GM12878 (cell line): ENCODE measurements at regions of chr2 and their contacts with region 1.

Region 1: DNA sequence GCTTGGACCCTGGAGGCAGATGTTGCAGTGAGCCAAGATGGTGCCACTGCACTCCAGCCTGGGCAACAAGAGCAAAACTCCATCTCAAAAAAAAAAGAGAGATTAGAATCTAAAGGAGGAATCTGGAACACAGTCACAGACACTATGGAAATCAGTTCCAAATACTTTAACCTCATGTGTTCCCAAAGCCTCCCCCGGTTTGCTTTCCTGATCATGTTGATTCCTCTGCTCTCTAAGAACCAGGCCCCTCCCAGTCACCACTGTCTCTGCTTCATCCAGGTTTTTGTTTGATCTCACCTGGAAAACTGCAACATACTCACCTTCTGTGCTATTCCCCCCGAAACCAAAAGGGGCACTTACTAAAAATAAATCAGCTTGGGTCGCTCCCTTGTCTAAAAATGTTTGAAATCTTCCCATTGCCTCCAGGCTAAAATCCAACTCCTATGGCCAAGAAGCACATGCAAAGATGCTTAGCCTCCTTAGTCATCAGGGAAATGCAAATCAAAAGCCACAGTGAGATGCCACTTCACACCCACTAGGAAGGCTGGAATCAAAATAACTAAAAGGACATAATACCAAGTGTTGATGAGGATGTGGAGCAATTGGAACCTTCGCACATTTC is 6.2 kb upstream of the NEU2 start:
- DNase-seq: no peak
- ATAC-seq: no peak
- H3K4me3 ChIP-seq: no peak overlapping the region
- H3K27ac ChIP-seq: no peak overlapping the region
- H3K4me1 ChIP-seq: no peaks in the 10 kb centered on the region
- H3K27me3 ChIP-seq: peaks cover 0 to 1% of the 10 kb centered on the region in 2 experiments; a peak in 1 of 4 replicates
- CTCF ChIP-seq: no peak
- EP300 ChIP-seq: no peak
- POLR2A ChIP-seq: no peak
- RAD21 ChIP-seq: no peak

Region 2: DNA sequence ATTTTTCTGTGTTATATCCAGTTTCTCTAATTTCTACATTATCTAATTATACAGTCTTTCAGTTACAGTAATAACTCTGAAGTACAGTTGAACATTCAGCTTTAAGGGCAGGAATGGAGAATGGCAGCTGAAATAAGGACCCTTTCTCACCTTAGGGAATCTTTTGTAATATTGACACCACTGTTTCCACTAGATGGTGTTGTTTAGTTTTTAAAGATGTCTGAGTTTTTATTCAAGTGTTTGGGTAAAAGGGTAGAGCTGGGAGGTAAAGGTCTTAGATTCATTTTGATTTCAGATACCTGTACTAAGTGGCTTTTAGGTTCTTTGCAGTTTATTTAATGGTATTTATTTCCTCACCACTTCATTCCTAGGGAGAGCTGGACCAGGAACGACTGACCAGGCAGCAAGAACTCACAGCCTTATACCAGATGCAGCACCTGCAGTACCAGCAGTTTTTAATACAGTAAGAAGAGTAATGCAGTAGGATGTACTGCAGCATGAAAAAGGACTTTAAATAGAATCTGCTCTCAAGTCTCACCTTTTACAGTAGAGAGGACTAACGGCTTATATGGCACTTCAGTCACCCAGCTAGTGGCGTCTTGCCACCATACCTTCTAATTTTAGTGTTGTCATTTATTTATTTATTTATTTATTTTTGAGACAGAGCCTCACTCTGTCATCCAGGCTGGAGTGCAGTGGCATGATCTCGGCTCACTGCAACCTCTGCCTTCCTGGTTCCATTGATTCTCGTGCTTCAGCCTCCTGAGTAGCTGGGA is 216.8 kb before region 1 on chr2:
- CTCF ChIA-PET with region 1: interaction called, 15 read pairs
- POLR2A ChIA-PET with region 1: no interaction called
- RAD21 ChIA-PET with region 1: interaction called, 10 read pairs
- SMC1A ChIA-PET with region 1: interaction called, 6 read pairs
- in situ Hi-C with region 1: no loop called
- intact Hi-C with region 1: no loop called
- DNase-seq: no peak
- ATAC-seq: no peak
- H3K4me3 ChIP-seq: no peak overlapping the region
- H3K27ac ChIP-seq: no peak overlapping the region
- H3K4me1 ChIP-seq: no peaks in the 10 kb centered on the region
- H3K27me3 ChIP-seq: no peaks in the 10 kb centered on the region
- CTCF ChIP-seq: no peak; a peak in 1 of 6 replicates
- EP300 ChIP-seq: no peak
- POLR2A ChIP-seq: no peak
- RAD21 ChIP-seq: peak; percentile 4; the same call in 1 of the 2 replicates

Region 3: GRCh38 chr2:232854082-232854481 is 172.2 kb before region 1 on chr2:
- CTCF ChIA-PET with region 1: interaction called, 25 read pairs
- POLR2A ChIA-PET with region 1: no interaction called
- RAD21 ChIA-PET with region 1: interaction called, 8 read pairs
- SMC1A ChIA-PET with region 1: interaction called, 6 read pairs
- in situ Hi-C with region 1: loop called (anchors 5 kb)
- intact Hi-C with region 1: loop called (anchors 5 kb)
- DNase-seq: no peak
- ATAC-seq: no peak
- H3K4me3 ChIP-seq: no peak overlapping the region
- H3K27ac ChIP-seq: no peak overlapping the region
- H3K4me1 ChIP-seq: no peaks in the 10 kb centered on the region
- H3K27me3 ChIP-seq: no peaks in the 10 kb centered on the region
- CTCF ChIP-seq: no peak
- EP300 ChIP-seq: no peak
- POLR2A ChIP-seq: no peak
- RAD21 ChIP-seq: no peak